IMR-90 (cell line): ENCODE measurements at regions of chr7 and their contacts with region 1.

Region 1: GRCh38 chr7:20299647-20300312 is 30.9 kb upstream of the ITGB8 start:
- DNase-seq: peak; percentile 45
- ATAC-seq: peak; percentile 83
- H3K4me3 ChIP-seq: no peak overlapping the region
- H3K27ac ChIP-seq: peak overlapping the region; percentile 76; the same call in 1 of the 2 replicates
- H3K4me1 ChIP-seq: peaks cover 2% of the 10 kb centered on the region; the same call in 1 of the 2 replicates
- H3K27me3 ChIP-seq: no peaks in the 10 kb centered on the region
- CTCF ChIP-seq: no peak
- POLR2A ChIP-seq: no peak
- RAD21 ChIP-seq: no peak

Region 2: DNA sequence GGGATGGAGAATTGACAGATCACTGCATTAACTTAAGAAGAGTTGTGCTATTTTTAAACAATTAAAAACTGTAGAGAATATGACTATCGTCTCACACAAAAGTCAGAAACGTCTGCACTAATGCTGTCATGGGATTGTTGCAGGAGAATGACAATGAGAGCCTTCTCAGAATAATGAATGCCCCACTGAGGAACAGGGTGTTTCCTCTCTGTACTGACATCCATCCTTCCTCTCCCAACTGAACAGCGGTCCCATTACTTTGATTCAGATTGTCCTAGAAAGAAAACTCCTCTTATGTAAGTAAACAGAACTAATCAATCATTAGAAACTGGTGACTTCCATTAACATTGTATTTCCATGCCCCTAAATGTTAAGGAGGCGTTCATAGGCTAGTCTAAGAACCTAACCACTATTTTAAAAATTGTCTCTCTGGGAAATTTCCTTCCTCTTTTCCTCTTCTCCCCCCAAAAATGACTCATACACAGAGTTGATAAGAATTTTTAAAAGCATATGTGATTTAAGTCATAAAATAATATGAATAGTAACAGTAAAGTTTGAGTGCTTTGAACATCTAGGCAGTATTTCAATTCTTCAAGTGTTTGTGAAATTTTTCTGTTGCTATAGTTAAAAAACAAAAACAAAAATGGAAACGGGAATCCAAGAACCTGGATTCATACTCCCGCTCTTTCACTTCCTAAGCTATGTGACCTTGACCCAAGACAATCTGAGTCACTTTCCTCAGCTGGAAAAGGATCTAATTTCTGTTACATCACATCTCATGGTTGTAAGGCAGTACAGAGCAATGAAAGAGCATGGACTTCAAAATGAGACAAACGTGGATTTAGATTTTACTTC is 69.9 kb before region 1 on chr7:
- CTCF ChIA-PET with region 1: no interaction called
- POLR2A ChIA-PET with region 1: no interaction called
- dilution Hi-C with region 1: no loop called
- in situ Hi-C with region 1: no loop called
- intact Hi-C with region 1: no loop called
- DNase-seq: peak; percentile 93
- ATAC-seq: peak; percentile 98
- H3K4me3 ChIP-seq: no peak overlapping the region
- H3K27ac ChIP-seq: no peak overlapping the region
- H3K4me1 ChIP-seq: no peaks in the 10 kb centered on the region; the same call in 1 of the 2 replicates
- H3K27me3 ChIP-seq: no peaks in the 10 kb centered on the region
- CTCF ChIP-seq: no peak
- POLR2A ChIP-seq: no peak
- RAD21 ChIP-seq: no peak

Region 3: GRCh38 chr7:20260223-20260622 is 39.6 kb before region 1 on chr7:
- CTCF ChIA-PET with region 1: no interaction called
- POLR2A ChIA-PET with region 1: no interaction called
- dilution Hi-C with region 1: no loop called
- in situ Hi-C with region 1: no loop called
- intact Hi-C with region 1: no loop called
- DNase-seq: peak; percentile 48
- ATAC-seq: peak; percentile 61
- H3K4me3 ChIP-seq: no peak overlapping the region
- H3K27ac ChIP-seq: no peak overlapping the region
- H3K4me1 ChIP-seq: no peaks in the 10 kb centered on the region
- H3K27me3 ChIP-seq: no peaks in the 10 kb centered on the region
- CTCF ChIP-seq: no peak
- POLR2A ChIP-seq: no peak
- RAD21 ChIP-seq: no peak

Region 4: DNA sequence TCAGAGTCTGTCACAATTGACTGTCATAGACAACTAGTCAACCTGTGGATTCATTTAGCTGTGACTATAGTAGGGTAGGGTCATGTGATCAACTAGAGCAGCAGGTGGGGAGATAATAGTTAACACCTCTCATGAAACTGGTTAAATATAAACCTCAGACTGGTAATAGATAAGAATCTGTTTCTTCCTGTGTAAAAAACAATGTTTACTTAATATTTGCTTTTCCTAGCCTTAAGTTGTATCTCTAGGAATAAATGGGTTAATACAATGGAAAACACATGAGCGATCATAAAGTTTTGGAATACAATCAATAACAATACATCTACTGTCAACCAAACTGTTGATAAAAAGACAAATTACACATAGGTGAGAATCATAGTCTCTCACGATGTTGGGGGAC is 12.5 kb before region 1 on chr7:
- CTCF ChIA-PET with region 1: interaction called, 7 read pairs
- POLR2A ChIA-PET with region 1: no interaction called
- dilution Hi-C with region 1: no loop called
- in situ Hi-C with region 1: no loop called
- intact Hi-C with region 1: loop called (anchors 2 kb)
- DNase-seq: no peak
- ATAC-seq: no peak
- H3K4me3 ChIP-seq: no peak overlapping the region
- H3K27ac ChIP-seq: no peak overlapping the region
- H3K4me1 ChIP-seq: no peaks in the 10 kb centered on the region
- H3K27me3 ChIP-seq: no peaks in the 10 kb centered on the region
- CTCF ChIP-seq: no peak
- POLR2A ChIP-seq: no peak
- RAD21 ChIP-seq: no peak